ENCODE measurements at regions of chr22 and their contacts with region 1.

Region 1: GRCh38 chr22:40487663-40488249 is 117.4 kb downstream of the SGSM3 start:
- DNase-seq: no peak
- ATAC-seq: peak; percentile 64
- H3K4me3 Mint-ChIP-seq: no peak overlapping the region
- H3K27ac Mint-ChIP-seq: no peak overlapping the region
- H3K4me1 Mint-ChIP-seq: peaks cover 45% of the 10 kb centered on the region
- H3K27me3 Mint-ChIP-seq: no peaks in the 10 kb centered on the region

Region 2: DNA sequence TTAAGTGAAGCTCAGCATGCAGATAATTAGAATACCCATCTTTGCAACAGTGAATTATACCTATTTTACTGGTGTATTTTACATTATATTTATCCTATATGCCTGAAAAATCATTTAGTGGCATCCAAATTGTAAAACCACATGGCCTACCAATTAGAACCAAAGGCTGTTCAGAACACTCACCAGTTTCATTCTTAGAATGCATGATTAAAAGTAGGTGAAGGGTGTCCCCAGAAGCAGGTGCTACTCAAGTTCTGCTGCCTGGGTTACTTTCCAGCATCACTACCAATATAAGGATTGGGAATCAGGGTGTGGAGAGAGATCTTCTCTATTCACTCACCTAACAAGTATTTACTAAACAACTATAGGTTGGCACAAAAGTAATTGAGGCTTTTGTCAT is 14.1 kb before region 1 on chr22:
- CTCF ChIA-PET with region 1: interaction called, 21 read pairs
- POLR2A ChIA-PET with region 1: no interaction called
- intact Hi-C with region 1: no loop called
- DNase-seq: no peak
- ATAC-seq: peak; percentile 71
- H3K4me3 Mint-ChIP-seq: no peak overlapping the region
- H3K27ac Mint-ChIP-seq: no peak overlapping the region
- H3K4me1 Mint-ChIP-seq: peaks cover 31% of the 10 kb centered on the region
- H3K27me3 Mint-ChIP-seq: no peaks in the 10 kb centered on the region

Region 3: DNA sequence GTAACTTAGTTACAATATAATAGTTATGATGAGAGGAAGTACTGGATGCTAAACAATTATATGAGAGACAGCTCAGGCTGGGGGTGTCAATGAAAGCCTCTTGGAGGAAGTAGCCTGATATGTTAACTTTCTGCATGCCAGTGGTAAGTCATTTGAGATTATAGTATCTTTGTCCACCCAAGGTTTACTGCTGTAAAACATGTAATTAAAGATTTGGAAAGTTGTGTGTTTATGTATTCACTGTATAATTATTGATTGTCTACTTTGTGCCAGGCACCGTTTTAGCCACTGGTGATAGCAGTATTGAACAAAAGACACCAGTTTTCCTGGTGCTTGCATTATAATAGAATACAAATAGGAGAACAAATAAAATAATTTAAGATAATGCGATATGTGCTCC is 374.8 kb after region 1 on chr22:
- CTCF ChIA-PET with region 1: no interaction called
- POLR2A ChIA-PET with region 1: no interaction called
- intact Hi-C with region 1: no loop called
- DNase-seq: no peak
- ATAC-seq: no peak
- H3K4me3 Mint-ChIP-seq: no peak overlapping the region
- H3K27ac Mint-ChIP-seq: no peak overlapping the region
- H3K4me1 Mint-ChIP-seq: peaks cover 31% of the 10 kb centered on the region
- H3K27me3 Mint-ChIP-seq: no peaks in the 10 kb centered on the region